Ascending aorta (tissue), 2 donors: ENCODE measurements at regions of chr1 and their contacts with region 1.

Region 1: GRCh38 chr1:67766141-67766978 is 66.9 kb downstream of the GNG12 start:
- DNase-seq: peak in 1 of 2 donors; percentile 82
- H3K4me3 ChIP-seq: peak overlapping the region; percentile 43 to 51
- H3K27ac ChIP-seq: peak overlapping the region; percentile 69 to 74
- H3K4me1 ChIP-seq: peaks cover 2 to 29% of the 10 kb centered on the region in 2 donors
- H3K27me3 ChIP-seq: no peaks in the 10 kb centered on the region
- CTCF ChIP-seq: peak; percentile 73 to 83 (median 81)

Region 2: DNA sequence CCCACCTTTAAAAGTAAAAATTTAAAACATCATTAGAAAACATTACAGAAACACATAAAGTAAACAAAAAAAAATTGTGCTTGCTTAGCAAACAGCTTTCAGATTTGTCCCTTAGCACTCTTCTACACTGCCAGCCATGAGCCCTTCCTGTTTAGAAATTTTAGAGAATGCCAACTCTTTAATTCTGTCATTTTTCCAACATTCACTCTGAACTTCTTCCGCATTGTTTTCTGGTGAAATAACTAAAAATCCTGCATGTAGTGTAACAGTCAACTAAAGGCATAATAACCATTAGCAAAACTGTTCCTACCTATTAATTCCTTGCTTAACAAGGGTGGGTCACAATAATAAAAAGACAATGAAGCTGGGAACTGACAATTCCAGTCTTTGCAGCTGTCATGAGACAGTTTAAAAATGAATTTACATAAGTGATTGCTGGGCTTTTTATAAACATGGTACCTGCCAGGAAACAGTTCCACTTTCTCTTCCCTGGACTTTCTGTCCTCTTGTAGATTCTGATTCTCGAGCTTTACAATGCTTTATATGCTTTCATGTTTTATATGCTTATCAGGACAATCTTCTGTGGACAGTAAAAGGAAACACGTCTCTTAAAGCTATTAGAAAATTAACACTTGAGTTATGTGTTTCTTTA is 47.9 kb after region 1 on chr1:
- intact Hi-C with region 1: loop called (anchors 5 kb)
- DNase-seq: no peak
- H3K4me3 ChIP-seq: peak overlapping the region in 1 of 2 donors; percentile 9
- H3K27ac ChIP-seq: peak overlapping the region; percentile 85 to 90
- H3K4me1 ChIP-seq: peaks cover 11 to 65% of the 10 kb centered on the region in 2 donors
- H3K27me3 ChIP-seq: no peaks in the 10 kb centered on the region
- CTCF ChIP-seq: no peak

Region 3: GRCh38 chr1:67832737-67833601 is 66.6 kb after region 1 on chr1 and contains the start of gene GNG12:
- intact Hi-C with region 1: loop called (anchors 5 kb)
- DNase-seq: peak; percentile 14 to 81
- H3K4me3 ChIP-seq: peak within 1 kb of the TSS; percentile 70 to 85
- H3K27ac ChIP-seq: peak within 1 kb of the TSS; percentile 93 to 96
- H3K4me1 ChIP-seq: peaks cover 4 to 29% of the 10 kb centered on the region in 2 donors
- H3K27me3 ChIP-seq: no peaks in the 10 kb centered on the region
- CTCF ChIP-seq: no peak
- total RNA-seq, gene GNG12: 71.2 TPM

Region 4: DNA sequence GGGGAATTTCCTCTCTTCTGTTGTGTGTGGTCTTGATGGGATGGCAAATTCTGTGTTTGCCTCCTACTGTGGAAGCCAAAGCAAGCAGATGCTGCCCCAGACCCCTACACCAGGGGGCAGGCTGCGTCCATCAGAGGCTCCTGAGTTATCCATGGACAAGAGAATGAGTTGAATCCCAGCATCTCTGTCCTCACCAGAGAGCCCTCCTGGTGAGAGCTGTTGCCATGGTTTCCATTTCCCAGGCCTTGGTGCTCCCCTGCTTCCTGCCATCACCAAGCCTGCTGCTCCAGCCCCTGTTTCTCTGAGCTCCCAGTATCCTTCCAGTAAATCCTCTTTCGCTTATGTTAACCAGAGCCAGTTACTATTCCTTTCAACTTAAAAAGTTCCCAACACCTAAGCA is 87.3 kb after region 1 on chr1:
- intact Hi-C with region 1: loop called (anchors 1 kb)
- DNase-seq: no peak
- H3K4me3 ChIP-seq: no peak overlapping the region
- H3K27ac ChIP-seq: no peak overlapping the region
- H3K4me1 ChIP-seq: peaks cover 4 to 7% of the 10 kb centered on the region in 2 donors
- H3K27me3 ChIP-seq: no peaks in the 10 kb centered on the region
- CTCF ChIP-seq: peak in 1 of 3 experiments; percentile 47

Region 5: GRCh38 chr1:68051475-68051874 is 285.1 kb after region 1 on chr1:
- intact Hi-C with region 1: loop called (anchors 2 kb)
- DNase-seq: no peak
- H3K4me3 ChIP-seq: peak overlapping the region; percentile 50 to 64
- H3K27ac ChIP-seq: no peak overlapping the region
- H3K4me1 ChIP-seq: no peaks in the 10 kb centered on the region
- H3K27me3 ChIP-seq: no peaks in the 10 kb centered on the region
- CTCF ChIP-seq: peak; percentile 30 to 53 (median 45)

Region 6: GRCh38 chr1:68111519-68112436 is 345.4 kb after region 1 on chr1:
- intact Hi-C with region 1: loop called (anchors 2 kb)
- DNase-seq: peak in 1 of 2 donors; percentile 76
- H3K4me3 ChIP-seq: no peak overlapping the region
- H3K27ac ChIP-seq: peak overlapping the region in 1 of 2 donors; percentile 12
- H3K4me1 ChIP-seq: peaks cover 0 to 12% of the 10 kb centered on the region in 2 donors
- H3K27me3 ChIP-seq: no peaks in the 10 kb centered on the region
- CTCF ChIP-seq: peak; percentile 46 to 60 (median 51)

Region 7: DNA sequence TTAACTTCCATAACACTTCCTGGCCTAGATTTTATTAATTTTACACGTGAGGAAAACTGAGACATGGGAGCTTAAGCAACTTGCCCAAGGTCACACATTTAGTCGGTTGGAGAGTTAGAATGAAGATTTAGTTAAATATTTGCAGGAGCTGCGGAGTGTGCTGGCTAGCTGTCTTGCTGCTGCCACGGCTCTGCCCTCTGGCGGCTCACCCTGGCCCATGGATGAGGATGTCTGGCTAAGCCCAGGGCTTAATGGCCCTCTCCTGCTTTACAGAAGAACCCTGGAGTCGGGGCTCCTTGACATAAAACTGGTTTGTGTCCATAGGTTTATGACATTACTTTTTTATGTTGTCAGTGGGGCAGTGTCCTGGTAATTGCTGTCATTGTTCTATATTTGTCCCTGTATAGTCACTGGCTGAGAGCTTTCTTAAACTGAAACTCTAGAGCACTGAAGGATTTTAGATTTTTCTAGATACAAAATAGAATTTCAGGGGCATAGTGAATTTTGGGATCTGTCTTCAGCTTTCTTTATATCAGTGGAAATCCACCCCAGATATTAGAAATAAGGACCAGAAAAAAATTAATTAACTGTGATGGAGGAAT is 554.8 kb after region 1 on chr1:
- intact Hi-C with region 1: loop called (anchors 10 kb)
- DNase-seq: peak in 1 of 2 donors; percentile 79
- H3K4me3 ChIP-seq: no peak overlapping the region
- H3K27ac ChIP-seq: no peak overlapping the region
- H3K4me1 ChIP-seq: peaks cover 0 to 2% of the 10 kb centered on the region in 2 donors
- H3K27me3 ChIP-seq: no peaks in the 10 kb centered on the region
- CTCF ChIP-seq: peak; percentile 36 to 70 (median 51)